BJ (cell line): ENCODE measurements at regions of chr20 and their contacts with region 1.

Region 1: DNA sequence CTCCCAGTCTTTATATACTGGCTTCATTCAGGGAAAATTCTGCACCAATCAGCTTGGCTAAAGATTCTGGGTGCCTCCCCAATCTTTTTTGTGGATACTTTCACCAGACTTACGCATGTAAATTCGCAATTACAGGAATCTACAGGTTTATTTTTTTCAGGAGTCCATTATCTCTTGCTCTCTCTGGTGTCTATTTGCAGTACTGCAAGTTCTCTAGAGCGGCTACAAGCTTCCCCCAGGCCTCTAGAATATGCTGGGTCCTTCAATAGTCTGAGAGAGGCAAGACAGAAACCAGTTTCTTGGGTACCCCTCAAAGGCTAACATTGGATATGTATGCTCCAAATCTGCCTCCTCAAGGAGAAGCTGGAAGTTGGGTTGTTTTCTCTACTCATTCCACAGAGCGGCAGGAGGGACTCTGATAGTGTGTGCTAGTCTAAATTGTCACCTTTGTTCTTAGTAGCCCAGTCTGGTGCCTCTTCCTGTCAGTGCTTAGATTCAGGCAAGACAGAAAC is 58.5 kb downstream of the SUN5 start:
- DNase-seq: no peak
- H3K4me3 ChIP-seq: no peak overlapping the region
- H3K27me3 ChIP-seq: peaks cover 5% of the 10 kb centered on the region
- CTCF ChIP-seq: peak; percentile 71

Region 2: DNA sequence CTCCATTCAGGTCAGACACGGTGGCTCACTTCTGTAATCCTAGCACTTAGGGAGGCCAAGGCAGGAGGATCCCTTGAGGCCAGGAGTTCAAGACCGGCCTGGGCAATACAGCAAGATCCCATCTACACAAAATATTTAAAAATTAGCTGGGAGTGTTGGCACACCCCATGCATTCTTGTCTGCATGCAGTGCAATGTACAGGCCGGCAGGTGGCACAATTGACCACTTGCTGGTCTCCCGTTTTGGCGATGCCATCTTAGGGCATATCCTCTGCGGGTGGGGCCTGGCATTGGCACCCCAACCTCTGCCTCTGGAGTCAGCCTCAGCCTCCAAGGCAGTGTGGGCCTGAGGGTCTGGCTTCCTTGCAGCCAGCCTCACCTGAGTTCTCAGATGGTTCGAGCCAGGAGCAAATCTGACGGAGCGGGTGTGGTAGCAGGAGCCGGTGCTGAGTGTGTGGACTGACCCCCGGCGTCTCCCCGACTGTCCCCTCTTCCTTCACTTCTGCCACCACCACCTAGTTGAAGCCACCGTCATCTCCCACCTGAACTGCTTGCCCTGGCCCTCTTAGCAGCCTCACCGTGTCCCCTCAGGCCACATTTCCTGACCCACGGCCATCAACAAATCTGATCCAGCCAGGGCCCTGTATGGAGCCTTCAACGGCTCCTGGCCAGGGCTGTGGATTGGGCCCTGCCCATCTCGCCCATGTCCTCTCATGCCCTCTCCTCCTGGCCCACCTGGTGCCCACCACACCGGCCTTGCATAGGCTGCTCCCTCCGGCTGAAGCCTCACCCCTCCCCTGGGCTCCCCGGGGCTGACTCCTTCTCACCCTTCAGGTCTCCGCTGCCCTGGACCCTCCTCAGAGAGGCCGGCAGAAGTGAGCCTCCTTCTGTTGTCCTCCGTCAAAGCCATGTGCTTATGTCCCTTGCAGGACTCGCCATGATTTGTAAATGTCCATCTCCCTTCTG is 43.0 kb before region 1 on chr20:
- CTCF ChIA-PET with region 1: interaction called, 46 read pairs
- POLR2A ChIA-PET with region 1: no interaction called
- DNase-seq: no peak
- H3K4me3 ChIP-seq: no peak overlapping the region
- H3K27me3 ChIP-seq: no peaks in the 10 kb centered on the region
- CTCF ChIP-seq: peak; percentile 92

Region 3: GRCh38 chr20:32920530-32921298 is 25.1 kb before region 1 on chr20:
- CTCF ChIA-PET with region 1: interaction called, 16 read pairs
- POLR2A ChIA-PET with region 1: no interaction called
- DNase-seq: no peak
- H3K4me3 ChIP-seq: no peak overlapping the region
- H3K27me3 ChIP-seq: no peaks in the 10 kb centered on the region; the same call in none of the 2 replicates
- CTCF ChIP-seq: no peak

Region 4: GRCh38 chr20:32959351-32960221 is 13.8 kb after region 1 on chr20:
- CTCF ChIA-PET with region 1: interaction called, 13 read pairs
- POLR2A ChIA-PET with region 1: no interaction called
- DNase-seq: no peak
- H3K4me3 ChIP-seq: no peak overlapping the region
- H3K27me3 ChIP-seq: peaks cover 3% of the 10 kb centered on the region; the same call in 1 of the 2 replicates
- CTCF ChIP-seq: no peak

Region 5: GRCh38 chr20:33062105-33062824 is 116.5 kb after region 1 on chr20:
- CTCF ChIA-PET with region 1: no interaction called
- POLR2A ChIA-PET with region 1: no interaction called
- DNase-seq: no peak
- H3K4me3 ChIP-seq: no peak overlapping the region
- H3K27me3 ChIP-seq: peaks cover 2% of the 10 kb centered on the region; the same call in 1 of the 2 replicates
- CTCF ChIP-seq: no peak